MCF 10A (cell line): ENCODE measurements at regions of chr4 and their contacts with region 1.

Region 1: GRCh38 chr4:122212880-122213279 is 60.7 kb downstream of the BLTP1 start:
- DNase-seq: no peak
- H3K4me3 Mint-ChIP-seq: no peak overlapping the region
- H3K27ac Mint-ChIP-seq: no peak overlapping the region
- H3K4me1 Mint-ChIP-seq: no peaks in the 10 kb centered on the region
- H3K27me3 Mint-ChIP-seq: no peaks in the 10 kb centered on the region
- CTCF ChIP-seq: no peak

Region 2: GRCh38 chr4:121950212-121950679 is 262.6 kb before region 1 on chr4:
- CTCF ChIA-PET with region 1: no interaction called
- POLR2A ChIA-PET with region 1: no interaction called
- intact Hi-C with region 1: loop called (anchors 1 kb)
- DNase-seq: peak; percentile 44
- H3K4me3 Mint-ChIP-seq: peak overlapping the region; percentile 69
- H3K27ac Mint-ChIP-seq: no peak overlapping the region
- H3K4me1 Mint-ChIP-seq: no peaks in the 10 kb centered on the region
- H3K27me3 Mint-ChIP-seq: peaks cover 39% of the 10 kb centered on the region
- CTCF ChIP-seq: peak; percentile 63